Activated CD8-positive, alpha-beta T cell treated with anti-CD3 and anti-CD28 coated beads, Interleukin-2, amount 10 ng/mL, durations not matched to agents 7 days and 5 days (primary cell): ENCODE measurements at regions of chr15 and their contacts with region 1.

Region 1: DNA sequence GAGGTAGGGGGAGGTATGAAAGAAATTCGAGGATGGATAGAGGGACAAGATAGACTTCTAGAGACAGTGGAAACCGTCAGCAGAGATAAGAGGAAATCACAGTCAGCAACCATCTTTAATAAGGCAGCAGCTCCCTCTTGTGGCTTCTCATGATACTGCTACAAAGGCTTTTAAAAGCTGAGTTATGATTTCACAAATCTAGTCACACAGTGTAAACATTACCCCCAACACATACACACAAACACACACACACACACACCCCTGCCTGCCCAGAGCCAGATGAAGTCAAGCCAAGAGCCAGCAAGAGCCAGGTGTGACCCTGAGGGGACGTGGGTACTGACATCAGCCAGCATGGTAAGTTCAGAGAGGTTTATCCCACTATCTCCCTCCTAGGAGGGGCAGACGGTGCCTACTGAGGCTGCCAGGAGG is 18.9 kb upstream of the TGM5 start:
- DNase-seq: peak; percentile 79
- ATAC-seq: peak; percentile 61
- H3K4me3 Mint-ChIP-seq: no peak overlapping the region
- H3K27ac Mint-ChIP-seq: peak overlapping the region; percentile 28
- H3K4me1 Mint-ChIP-seq: peaks cover 12% of the 10 kb centered on the region
- H3K27me3 Mint-ChIP-seq: peaks cover 18% of the 10 kb centered on the region

Region 2: DNA sequence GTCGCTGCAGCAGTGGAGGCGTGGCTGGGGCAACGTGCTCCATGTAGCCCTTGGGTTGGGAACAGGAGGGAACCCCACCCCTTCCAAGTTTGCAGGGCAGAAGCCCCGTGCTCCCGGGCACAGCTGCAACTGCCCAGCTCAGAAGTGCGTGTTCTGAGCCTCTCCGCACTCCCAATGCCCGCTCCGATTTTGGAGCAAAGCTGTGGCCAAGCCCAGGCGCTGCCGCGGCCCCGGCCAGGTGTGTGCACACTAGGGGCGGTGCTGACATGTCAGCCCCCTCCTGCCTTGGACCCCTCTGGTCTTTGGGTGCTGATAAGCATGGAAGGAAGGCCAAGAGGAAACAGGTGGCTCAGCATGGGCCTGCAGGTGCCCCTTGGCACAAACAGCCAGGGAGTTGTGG is 277.5 kb before region 1 on chr15:
- CTCF ChIA-PET with region 1: no interaction called
- POLR2A ChIA-PET with region 1: no interaction called
- DNase-seq: no peak
- ATAC-seq: no peak
- H3K4me3 Mint-ChIP-seq: no peak overlapping the region
- H3K27ac Mint-ChIP-seq: no peak overlapping the region
- H3K4me1 Mint-ChIP-seq: no peaks in the 10 kb centered on the region
- H3K27me3 Mint-ChIP-seq: no peaks in the 10 kb centered on the region

Region 3: DNA sequence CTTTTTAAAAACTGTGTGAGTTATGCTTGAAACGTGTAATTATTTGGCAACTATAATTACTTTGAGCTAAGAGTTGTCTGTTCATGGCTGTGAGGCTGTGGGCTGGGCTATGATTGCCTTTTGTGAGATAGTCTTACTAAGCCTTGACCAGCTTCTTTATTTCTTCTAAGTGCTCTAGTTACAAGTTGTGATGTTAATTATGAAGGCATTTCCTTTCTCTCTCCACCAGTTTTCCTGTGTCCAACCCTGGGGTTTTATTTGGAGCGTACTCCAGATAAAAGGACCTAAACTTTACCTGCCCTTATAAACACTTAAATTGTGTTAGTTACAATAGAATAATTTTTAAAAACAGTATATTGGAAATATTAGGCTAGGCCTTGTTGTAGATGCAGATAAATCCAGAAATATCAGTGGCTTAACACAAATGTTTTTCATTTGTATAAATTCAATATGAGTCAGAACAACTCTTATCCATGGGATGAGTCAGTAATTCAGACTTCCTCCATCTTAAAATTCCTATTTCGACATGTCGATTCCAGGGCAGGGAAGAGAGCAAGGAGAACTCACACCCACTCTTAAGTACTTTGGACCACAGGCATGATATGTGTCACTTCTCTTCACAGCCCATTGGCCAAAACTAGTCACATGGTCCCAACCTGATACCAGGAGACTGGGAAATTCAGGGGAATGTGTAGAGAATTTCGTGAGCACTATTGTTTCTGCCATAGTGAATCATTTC is 135.3 kb before region 1 on chr15:
- CTCF ChIA-PET with region 1: no interaction called
- POLR2A ChIA-PET with region 1: no interaction called
- DNase-seq: no peak
- ATAC-seq: no peak
- H3K4me3 Mint-ChIP-seq: no peak overlapping the region
- H3K27ac Mint-ChIP-seq: no peak overlapping the region
- H3K4me1 Mint-ChIP-seq: peaks cover 26% of the 10 kb centered on the region
- H3K27me3 Mint-ChIP-seq: no peaks in the 10 kb centered on the region

Region 4: GRCh38 chr15:43185157-43186017 is 100.2 kb before region 1 on chr15 and contains the start of gene CCNDBP1:
- CTCF ChIA-PET with region 1: interaction called, 12 read pairs
- POLR2A ChIA-PET with region 1: interaction called, 3 read pairs
- DNase-seq: peak; percentile 95
- ATAC-seq: peak; percentile 94
- H3K4me3 Mint-ChIP-seq: peak within 1 kb of the TSS; percentile 93
- H3K27ac Mint-ChIP-seq: peak within 1 kb of the TSS; percentile 96
- H3K4me1 Mint-ChIP-seq: peaks cover 37% of the 10 kb centered on the region
- H3K27me3 Mint-ChIP-seq: no peaks in the 10 kb centered on the region
- total RNA-seq, gene CCNDBP1: 58.0 to 63.2 TPM

Region 5: DNA sequence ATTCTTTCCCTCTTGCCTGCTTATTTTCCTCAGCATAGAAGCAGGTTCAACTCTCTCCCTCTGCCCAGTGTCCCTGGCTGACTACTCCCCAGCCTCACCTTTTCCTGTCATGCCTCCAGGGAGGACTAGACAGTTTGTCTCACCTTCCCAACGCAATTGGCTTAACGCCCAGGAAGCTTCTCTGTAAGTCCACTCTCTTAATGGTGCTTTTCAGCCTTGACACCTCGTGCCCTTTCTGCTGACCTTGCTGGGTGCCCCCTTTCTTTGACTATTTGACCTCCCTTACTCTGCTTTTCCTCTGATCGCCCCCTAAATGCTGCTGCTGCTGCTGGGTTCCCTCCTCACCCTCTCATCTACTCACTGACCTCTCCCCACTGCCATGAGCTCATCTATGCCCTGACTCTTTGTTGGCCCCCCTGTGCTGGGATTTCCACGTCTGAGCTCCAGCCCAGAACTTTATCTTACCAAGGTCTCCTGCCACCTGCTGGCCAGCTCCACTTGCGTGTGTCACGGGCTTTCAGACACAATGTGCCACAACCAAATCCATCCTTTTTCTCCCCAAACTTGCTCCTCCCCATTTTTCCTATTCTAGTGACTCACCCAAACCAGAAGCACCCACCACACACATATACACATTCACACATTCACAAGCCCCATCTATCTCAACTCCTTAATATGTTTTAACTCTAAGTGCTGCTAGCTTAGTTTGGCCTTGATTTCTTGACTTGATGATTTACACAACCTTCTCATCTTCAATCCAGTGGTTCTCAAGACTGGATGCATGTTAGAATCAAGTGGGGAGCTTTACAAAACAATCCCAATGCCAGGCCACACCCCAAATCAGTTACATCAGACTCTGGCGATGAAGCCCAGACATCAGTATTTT is 81.4 kb before region 1 on chr15:
- CTCF ChIA-PET with region 1: interaction called, 51 read pairs
- POLR2A ChIA-PET with region 1: interaction called, 4 read pairs
- DNase-seq: peak; percentile 73
- ATAC-seq: peak; percentile 75
- H3K4me3 Mint-ChIP-seq: no peak overlapping the region
- H3K27ac Mint-ChIP-seq: no peak overlapping the region
- H3K4me1 Mint-ChIP-seq: peaks cover 17% of the 10 kb centered on the region
- H3K27me3 Mint-ChIP-seq: peaks cover 15% of the 10 kb centered on the region

Region 6: GRCh38 chr15:43225201-43225949 is 60.2 kb before region 1 on chr15:
- CTCF ChIA-PET with region 1: interaction called, 274 read pairs
- POLR2A ChIA-PET with region 1: interaction called, 13 read pairs
- DNase-seq: peak; percentile 78
- ATAC-seq: peak; percentile 99
- H3K4me3 Mint-ChIP-seq: no peak overlapping the region
- H3K27ac Mint-ChIP-seq: no peak overlapping the region
- H3K4me1 Mint-ChIP-seq: peaks cover 6% of the 10 kb centered on the region
- H3K27me3 Mint-ChIP-seq: peaks cover 20% of the 10 kb centered on the region

Region 7: GRCh38 chr15:43268111-43269105 is 17.2 kb before region 1 on chr15:
- CTCF ChIA-PET with region 1: interaction called, 41 read pairs
- POLR2A ChIA-PET with region 1: no interaction called
- DNase-seq: peak; percentile 63
- ATAC-seq: peak; percentile 59
- H3K4me3 Mint-ChIP-seq: no peak overlapping the region
- H3K27ac Mint-ChIP-seq: no peak overlapping the region
- H3K4me1 Mint-ChIP-seq: peaks cover 22% of the 10 kb centered on the region
- H3K27me3 Mint-ChIP-seq: peaks cover 28% of the 10 kb centered on the region